ENCODE measurements at regions of chr9 and their contacts with region 1.

Region 1: GRCh38 chr9:77433675-77434445 is 214.3 kb downstream of the GNA14 start:
- DNase-seq: no peak
- H3K4me3 ChIP-seq: no peak overlapping the region
- H3K27ac ChIP-seq: no peak overlapping the region
- H3K4me1 ChIP-seq: no peaks in the 10 kb centered on the region
- H3K27me3 ChIP-seq: no peaks in the 10 kb centered on the region
- CTCF ChIP-seq: peak; percentile 92 to 99 (median 99)
- EP300 ChIP-seq: no peak
- POLR2A ChIP-seq: no peak
- RAD21 ChIP-seq: peak; percentile 98

Region 2: DNA sequence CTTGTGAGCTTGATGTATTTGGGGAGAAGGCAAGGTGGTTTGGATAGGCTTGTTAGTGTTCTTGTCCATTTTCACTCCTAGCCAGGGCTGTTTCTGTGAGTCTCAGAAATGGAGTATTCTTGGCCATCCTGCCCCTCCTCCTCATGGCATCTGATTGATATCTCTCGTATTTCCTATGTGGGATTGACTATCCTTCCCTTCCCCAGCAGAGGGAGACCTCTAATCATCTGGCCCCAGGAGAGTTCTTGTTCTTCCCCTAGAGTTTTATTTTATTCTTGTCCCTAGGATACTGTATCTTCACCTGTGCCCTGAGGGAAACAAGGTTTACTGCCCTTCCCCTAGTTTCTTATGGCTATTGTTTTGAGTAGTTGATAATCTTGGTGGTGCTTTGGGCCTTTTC is 142.1 kb before region 1 on chr9:
- CTCF ChIA-PET with region 1: interaction called, 11 read pairs
- POLR2A ChIA-PET with region 1: no interaction called
- DNase-seq: no peak
- H3K4me3 ChIP-seq: no peak overlapping the region
- H3K27ac ChIP-seq: no peak overlapping the region
- H3K4me1 ChIP-seq: peaks cover 0 to 11% (median 2%) of the 10 kb centered on the region in 4 experiments; a peak in 4 of 7 replicates
- H3K27me3 ChIP-seq: no peaks in the 10 kb centered on the region
- CTCF ChIP-seq: peak in 2 of 3 experiments; percentile 62 to 71; a peak in 3 of 4 replicates
- EP300 ChIP-seq: no peak
- POLR2A ChIP-seq: no peak
- RAD21 ChIP-seq: peak; percentile 68 to 74

Region 3: DNA sequence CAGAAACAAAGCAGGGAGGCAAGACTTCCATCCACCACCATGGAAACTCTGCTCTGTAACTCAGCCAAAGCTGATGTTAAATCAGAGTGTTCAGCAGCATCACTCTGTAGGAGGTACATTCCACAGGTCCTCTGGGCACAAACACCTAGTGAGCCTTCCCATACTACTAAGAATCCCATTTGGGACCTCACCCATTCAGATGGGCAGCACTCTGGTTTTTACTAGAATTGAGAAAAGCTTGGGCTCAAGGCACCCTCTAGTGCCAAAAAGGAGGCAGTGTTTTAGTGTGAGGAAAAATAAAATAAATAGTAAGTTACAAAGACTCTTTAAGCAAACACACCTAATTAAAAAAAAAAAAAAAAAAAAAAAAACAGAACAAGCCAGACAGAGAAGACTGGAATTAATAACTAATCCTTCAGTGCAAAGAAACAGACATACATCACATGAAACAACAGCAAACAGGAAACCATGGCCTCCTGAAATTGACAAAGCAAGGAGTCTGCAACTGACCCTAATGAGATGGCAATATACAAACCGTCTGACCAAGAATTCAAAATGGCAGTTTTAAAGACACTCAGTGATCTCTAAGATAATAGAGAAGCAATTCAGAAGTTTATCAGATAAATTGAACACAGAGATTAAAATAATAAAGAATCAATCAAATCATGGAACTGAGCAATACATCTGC is 54.7 kb after region 1 on chr9:
- CTCF ChIA-PET with region 1: interaction called, 42 read pairs
- POLR2A ChIA-PET with region 1: interaction called, 6 read pairs
- DNase-seq: no peak
- H3K4me3 ChIP-seq: no peak overlapping the region
- H3K27ac ChIP-seq: no peak overlapping the region
- H3K4me1 ChIP-seq: no peaks in the 10 kb centered on the region; a peak in 2 of 7 replicates
- H3K27me3 ChIP-seq: no peaks in the 10 kb centered on the region
- CTCF ChIP-seq: peak in 2 of 3 experiments; percentile 53 to 57; a peak in 3 of 4 replicates
- EP300 ChIP-seq: no peak
- POLR2A ChIP-seq: no peak
- RAD21 ChIP-seq: peak; percentile 80 to 81

Region 4: GRCh38 chr9:77531400-77531799 is 97.5 kb after region 1 on chr9:
- CTCF ChIA-PET with region 1: interaction called, 12 read pairs
- POLR2A ChIA-PET with region 1: no interaction called
- DNase-seq: no peak
- H3K4me3 ChIP-seq: no peak overlapping the region
- H3K27ac ChIP-seq: no peak overlapping the region
- H3K4me1 ChIP-seq: peaks cover 3 to 14% (median 9%) of the 10 kb centered on the region in 4 experiments
- H3K27me3 ChIP-seq: no peaks in the 10 kb centered on the region
- CTCF ChIP-seq: no peak
- EP300 ChIP-seq: no peak
- POLR2A ChIP-seq: no peak
- RAD21 ChIP-seq: no peak

Region 5: DNA sequence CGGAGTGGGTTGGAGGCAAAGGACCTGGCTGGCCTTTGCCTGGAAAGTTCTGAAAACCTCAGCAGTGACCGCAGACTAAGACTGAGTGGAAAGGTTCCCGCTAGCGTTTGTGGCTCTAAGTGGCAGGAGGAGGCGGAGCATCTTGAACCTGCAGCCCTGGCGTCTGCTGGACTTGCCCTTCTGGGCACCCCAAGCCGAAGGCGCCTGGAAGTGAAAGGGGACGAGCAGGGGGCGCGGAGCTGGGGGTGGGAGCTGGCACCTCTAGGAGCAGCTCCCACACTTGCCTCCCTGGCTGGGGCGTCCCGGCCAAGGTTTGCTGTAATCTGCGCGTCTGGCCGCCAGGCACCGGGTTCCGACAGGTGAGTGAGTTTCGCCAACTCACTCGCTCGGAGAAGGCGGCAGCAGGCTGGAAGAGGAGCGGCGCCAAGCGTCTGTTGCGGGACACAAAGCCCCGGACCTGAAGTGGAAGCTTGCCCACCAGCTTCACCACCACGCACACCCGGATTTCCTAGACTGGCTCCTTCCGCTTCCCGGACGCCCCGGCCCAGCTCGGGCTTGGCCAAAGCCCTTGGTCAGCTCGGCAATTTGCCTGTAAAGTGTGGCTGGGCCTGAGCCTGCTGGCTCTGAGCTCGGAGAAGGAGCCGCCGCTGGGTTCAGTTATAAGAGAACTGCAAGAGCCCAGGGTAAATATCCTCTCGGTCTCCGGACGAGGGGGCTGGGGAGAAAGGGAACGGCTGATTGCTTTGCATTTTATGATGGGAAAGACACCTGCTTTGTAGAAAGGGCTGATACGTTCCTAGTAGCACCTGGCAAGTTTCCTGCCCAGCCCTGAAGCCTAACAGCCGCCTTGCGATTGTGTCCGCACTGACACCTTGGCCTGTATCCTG is 214.6 kb after region 1 on chr9 and contains the start of gene GNA14:
- CTCF ChIA-PET with region 1: interaction called, 23 read pairs
- POLR2A ChIA-PET with region 1: no interaction called
- DNase-seq: peak in 1 of 2 experiments; percentile 85
- H3K4me3 ChIP-seq: peak within 1 kb of the TSS; percentile 47 to 79 (median 75)
- H3K27ac ChIP-seq: no peak within 1 kb of the TSS
- H3K4me1 ChIP-seq: peaks cover 0 to 17% (median 4%) of the 10 kb centered on the region in 4 experiments; a peak in 6 of 7 replicates
- H3K27me3 ChIP-seq: peaks cover 6 to 32% (median 21%) of the 10 kb centered on the region in 4 experiments
- CTCF ChIP-seq: peak; percentile 26 to 36 (median 27)
- EP300 ChIP-seq: no peak
- POLR2A ChIP-seq: no peak
- RAD21 ChIP-seq: peak; percentile 48 to 54
- total RNA-seq, gene GNA14: 3.2 and 3.4 TPM in 2 replicates

Region 6: DNA sequence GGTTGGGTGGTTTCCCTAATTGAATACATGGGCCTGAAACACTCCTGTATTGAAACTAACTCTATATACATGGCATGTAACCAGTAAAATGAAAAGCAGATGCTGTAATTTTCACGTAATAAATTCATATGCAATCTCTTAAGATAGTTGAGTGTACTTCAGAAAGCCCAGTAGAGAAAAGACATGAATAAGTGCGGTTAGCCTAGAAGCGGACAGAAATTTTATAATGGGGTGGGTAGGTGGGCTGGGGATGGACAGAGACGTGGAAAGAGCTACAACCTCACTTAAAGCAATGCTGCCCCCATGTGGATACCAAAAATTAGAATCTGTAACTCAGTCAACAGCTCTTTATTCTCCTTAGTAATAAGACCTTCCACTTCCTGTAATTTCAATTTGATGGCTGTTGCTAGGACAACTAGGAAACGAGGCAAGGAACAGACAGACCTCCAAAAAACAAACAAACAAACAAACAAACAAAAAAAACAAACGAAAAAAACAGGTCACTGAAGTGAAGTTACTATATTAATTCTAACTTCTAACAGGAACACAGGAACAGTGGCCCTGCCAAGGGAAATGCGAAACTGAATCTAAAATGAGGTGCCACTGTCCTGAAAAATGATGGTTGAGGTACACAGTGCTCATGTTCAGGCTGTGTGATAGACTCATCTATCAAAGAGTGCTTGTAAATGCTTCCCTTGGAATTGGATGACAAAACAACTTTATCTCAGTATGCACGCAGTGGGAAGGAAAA is 317.7 kb after region 1 on chr9:
- CTCF ChIA-PET with region 1: interaction called, 40 read pairs
- POLR2A ChIA-PET with region 1: no interaction called
- DNase-seq: no peak
- H3K4me3 ChIP-seq: no peak overlapping the region
- H3K27ac ChIP-seq: no peak overlapping the region
- H3K4me1 ChIP-seq: no peaks in the 10 kb centered on the region; a peak in 2 of 7 replicates
- H3K27me3 ChIP-seq: no peaks in the 10 kb centered on the region
- CTCF ChIP-seq: peak; percentile 9 to 64 (median 64)
- EP300 ChIP-seq: no peak
- POLR2A ChIP-seq: no peak
- RAD21 ChIP-seq: peak; percentile 88 to 92

Measured in H1 (cell line).